GM13976 (cell line): ENCODE measurements at regions of chr21 and their contacts with region 1.

Region 1: DNA sequence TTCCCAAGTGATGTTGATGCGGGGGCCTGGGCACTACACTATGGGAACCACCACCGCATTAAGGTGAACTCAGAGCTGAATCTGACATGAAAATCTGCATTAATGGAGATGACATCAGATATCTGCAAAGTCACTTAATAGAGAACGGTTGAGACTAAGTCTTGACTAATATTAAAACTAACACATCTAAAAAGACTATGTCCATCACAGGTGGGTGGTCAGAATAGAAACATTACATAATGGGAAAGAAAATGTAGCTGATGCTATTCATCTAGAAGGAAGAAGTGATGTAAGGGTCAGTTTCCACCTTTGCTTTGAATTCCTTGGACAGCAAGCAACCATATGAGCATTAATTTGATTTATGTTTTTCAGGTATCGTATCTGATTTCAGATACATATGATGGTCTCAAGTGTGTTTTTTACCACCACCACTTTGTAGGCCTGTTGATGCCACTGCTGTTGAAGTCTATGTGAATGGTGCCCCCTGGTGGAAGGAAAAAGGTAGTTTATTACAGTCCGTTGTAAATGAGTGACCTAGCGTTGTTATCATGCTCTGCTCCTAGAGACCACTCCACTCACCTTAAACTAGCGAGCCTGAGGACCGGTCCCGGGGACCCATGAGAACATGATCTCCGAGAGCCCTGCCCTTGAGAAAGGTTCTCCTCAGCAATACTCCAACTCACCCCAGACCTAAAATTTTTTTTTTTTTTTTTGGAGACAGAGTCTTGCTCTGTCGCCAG is 73.5 kb downstream of the BACH1 start:
- DNase-seq: peak; percentile 54
- CTCF ChIP-seq: peak; percentile 44

Region 2: GRCh38 chr21:29078869-29079767 is 293.1 kb before region 1 on chr21:
- in situ Hi-C with region 1: loop called (anchors 5 kb)
- DNase-seq: no peak
- CTCF ChIP-seq: no peak

Region 3: GRCh38 chr21:29175408-29176134 is 196.7 kb before region 1 on chr21:
- in situ Hi-C with region 1: loop called (anchors 10 kb)
- DNase-seq: no peak
- CTCF ChIP-seq: no peak

Region 4: GRCh38 chr21:29453511-29453910 is 81.3 kb after region 1 on chr21:
- in situ Hi-C with region 1: loop called (anchors 25 kb)
- DNase-seq: no peak
- CTCF ChIP-seq: no peak